ENCODE measurements at regions of chr10 and their contacts with region 1.

Region 1: GRCh38 chr10:35642027-35642792 is at the start of gene FZD8:
- DNase-seq: peak; percentile 90
- H3K4me3 ChIP-seq: peak within 1 kb of the TSS; percentile 81
- H3K27ac ChIP-seq: no peak within 1 kb of the TSS
- H3K4me1 ChIP-seq: peaks cover 17% of the 10 kb centered on the region
- CTCF ChIP-seq: peak; percentile 67
- total RNA-seq, gene FZD8: 4.7 and 4.9 TPM in 2 replicates

Region 2: DNA sequence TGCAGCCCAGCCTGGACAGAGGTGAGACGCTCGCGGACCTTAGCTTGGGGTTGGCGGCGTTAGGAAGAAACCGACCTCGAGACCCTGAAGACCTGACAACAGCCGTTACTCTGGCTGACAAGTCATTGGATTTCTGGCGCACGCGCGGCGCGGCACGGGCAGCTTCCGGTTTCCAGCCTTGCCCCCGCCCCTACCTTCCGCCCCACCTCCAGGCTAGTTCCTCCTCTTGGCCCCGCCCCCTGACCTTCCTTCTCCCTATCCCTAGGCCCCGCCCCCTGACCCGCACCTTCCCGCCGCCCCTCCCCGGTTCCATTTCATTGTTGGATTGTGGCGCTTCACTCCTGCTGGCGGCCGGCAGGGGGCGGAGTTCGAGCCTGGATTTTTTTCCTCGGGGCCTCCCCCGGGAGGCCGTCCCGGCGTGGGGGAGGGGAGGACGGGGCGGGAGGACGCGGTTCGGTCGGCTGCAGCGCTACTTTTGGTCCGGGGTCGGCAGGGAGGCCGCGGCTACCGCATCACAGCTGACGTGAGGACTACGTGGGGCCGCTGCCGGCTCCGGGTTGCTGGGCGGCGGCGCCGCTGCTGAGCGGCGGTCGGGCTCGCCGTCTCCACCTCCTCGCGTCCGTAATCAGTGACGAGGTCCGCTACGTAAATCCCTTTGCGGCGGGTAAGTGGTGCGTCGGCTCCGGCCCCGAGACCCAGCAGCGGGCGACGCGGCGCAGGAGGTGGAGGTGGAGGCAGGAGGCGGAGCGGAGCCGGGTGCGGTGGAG is 515.5 kb before region 1 on chr10 and contains the start of gene CREM:
- CTCF ChIA-PET with region 1: no interaction called
- POLR2A ChIA-PET with region 1: no interaction called
- intact Hi-C with region 1: loop called (anchors 5 kb)
- DNase-seq: peak; percentile 98
- H3K4me3 ChIP-seq: peak within 1 kb of the TSS; percentile 93
- H3K27ac ChIP-seq: peak within 1 kb of the TSS; percentile 85
- H3K4me1 ChIP-seq: peaks cover 43% of the 10 kb centered on the region
- CTCF ChIP-seq: peak; percentile 82
- total RNA-seq, gene CREM: 31.9 and 38.1 TPM in 2 replicates

Region 3: GRCh38 chr10:36534471-36535002 is 892.3 kb after region 1 on chr10:
- CTCF ChIA-PET with region 1: no interaction called
- POLR2A ChIA-PET with region 1: no interaction called
- intact Hi-C with region 1: loop called (anchors 10 kb)
- DNase-seq: peak; percentile 77
- H3K4me3 ChIP-seq: no peak overlapping the region
- H3K27ac ChIP-seq: no peak overlapping the region
- H3K4me1 ChIP-seq: peaks cover 16% of the 10 kb centered on the region
- CTCF ChIP-seq: no peak